Tibial artery (tissue), 4 donors: ENCODE measurements at regions of chr2 and their contacts with region 1.

Region 1: GRCh38 chr2:240205348-240205747 is 64.9 kb upstream of the OTOS start:
- DNase-seq: peak in 1 of 2 donors; percentile 13
- H3K4me3 ChIP-seq: no peak overlapping the region
- H3K27ac ChIP-seq: no peak overlapping the region
- H3K4me1 ChIP-seq: no peaks in the 10 kb centered on the region
- H3K27me3 ChIP-seq: peaks cover 0 to 43% of the 10 kb centered on the region in 2 donors
- CTCF ChIP-seq: no peak

Region 2: GRCh38 chr2:240287496-240288086 is 82.2 kb after region 1 on chr2:
- intact Hi-C with region 1: no loop called
- DNase-seq: no peak
- H3K4me3 ChIP-seq: no peak overlapping the region
- H3K27ac ChIP-seq: no peak overlapping the region
- H3K4me1 ChIP-seq: peaks cover 0 to 15% (median 4%) of the 10 kb centered on the region in 4 donors
- H3K27me3 ChIP-seq: no peaks in the 10 kb centered on the region
- CTCF ChIP-seq: no peak

Region 3: GRCh38 chr2:240803191-240803590 is 597.8 kb after region 1 on chr2:
- intact Hi-C with region 1: loop called (anchors 5 kb)
- DNase-seq: no peak
- H3K4me3 ChIP-seq: no peak overlapping the region
- H3K27ac ChIP-seq: no peak overlapping the region
- H3K4me1 ChIP-seq: no peaks in the 10 kb centered on the region
- H3K27me3 ChIP-seq: peaks cover 0 to 23% of the 10 kb centered on the region in 2 donors
- CTCF ChIP-seq: no peak